B cell (primary cell): ENCODE measurements at regions of chr5 and their contacts with region 1.

Region 1: DNA sequence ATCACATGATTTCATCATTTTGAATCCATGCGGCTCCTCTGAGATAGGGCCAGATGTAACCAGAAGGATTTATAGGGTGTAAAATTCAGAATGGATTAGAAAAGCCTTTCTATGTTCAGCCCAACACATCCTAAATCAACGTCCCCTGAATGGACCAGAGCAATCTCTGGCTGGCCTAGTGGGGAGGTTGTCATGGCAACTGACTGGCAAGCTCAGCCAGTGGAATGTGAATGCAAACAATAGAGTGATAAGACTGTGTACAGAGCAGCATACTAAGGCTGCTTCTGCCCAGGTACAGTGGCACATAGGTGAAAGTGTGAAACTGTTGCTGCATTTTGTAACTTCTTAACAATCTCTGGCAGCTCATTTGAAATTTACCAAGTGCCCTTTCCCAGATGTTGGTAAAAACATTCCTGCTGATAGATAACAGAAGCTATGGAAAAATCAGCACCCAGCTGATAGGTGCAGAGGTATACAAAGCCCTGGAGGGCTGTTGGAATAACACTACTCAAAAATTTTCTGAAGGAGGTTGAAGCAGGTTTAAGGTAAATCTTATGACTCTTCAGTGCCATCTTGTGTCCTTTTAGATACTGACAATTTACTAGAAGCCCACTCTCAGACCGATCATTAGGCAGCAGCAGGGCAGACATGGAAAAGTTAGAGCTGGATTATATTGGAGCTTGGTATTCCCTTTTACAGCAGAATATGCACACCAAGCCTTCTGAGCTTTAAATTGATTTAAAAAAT is 267.2 kb downstream of the RAB3C start:
- DNase-seq: peak; percentile 67
- ATAC-seq: peak; percentile 78
- H3K4me3 ChIP-seq: no peak overlapping the region
- H3K4me3 Mint-ChIP-seq: no peak overlapping the region
- H3K27ac ChIP-seq: no peak overlapping the region
- H3K27ac Mint-ChIP-seq: no peak overlapping the region
- H3K4me1 ChIP-seq: no peaks in the 10 kb centered on the region
- H3K4me1 Mint-ChIP-seq: no peaks in the 10 kb centered on the region
- H3K27me3 ChIP-seq: no peaks in the 10 kb centered on the region
- H3K27me3 Mint-ChIP-seq: peaks cover 3% of the 10 kb centered on the region
- CTCF ChIP-seq: peak; percentile 78

Region 2: DNA sequence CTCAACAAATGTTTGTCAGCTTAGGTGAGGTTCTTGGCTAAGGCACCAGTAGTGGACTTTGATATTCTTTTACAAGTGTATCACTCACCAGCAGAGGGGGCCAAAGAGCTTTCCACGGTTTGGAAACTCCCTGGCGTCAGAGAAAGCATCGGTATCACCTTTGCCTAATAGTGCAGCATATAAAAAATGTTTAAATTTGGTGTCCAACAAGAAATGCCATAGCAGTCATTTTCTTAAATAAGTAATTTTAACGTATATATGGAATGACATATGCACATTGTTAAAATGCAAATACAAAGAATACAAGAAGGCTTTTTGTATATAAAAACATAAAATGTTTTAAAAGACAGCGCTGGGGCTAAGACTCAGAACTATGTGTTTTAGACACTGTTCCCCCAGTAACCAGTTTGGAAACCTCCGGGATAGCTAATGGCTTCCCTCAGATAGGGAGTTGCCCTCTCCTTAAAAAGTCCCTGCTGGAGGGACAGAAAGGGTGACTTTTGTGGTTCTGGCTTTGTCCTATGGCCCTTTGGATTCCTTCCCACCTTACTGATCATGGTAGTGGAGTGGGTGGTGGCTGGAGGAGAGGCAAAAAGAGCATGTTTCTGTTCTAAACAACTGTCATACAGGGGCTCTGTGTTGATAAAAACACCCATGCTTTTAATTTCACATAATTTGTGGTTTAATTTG is 1551.7 kb before region 1 on chr5:
- CTCF ChIA-PET with region 1: interaction called, 4 read pairs
- POLR2A ChIA-PET with region 1: no interaction called
- intact Hi-C with region 1: loop called (anchors 1 kb)
- DNase-seq: peak; percentile 88
- ATAC-seq: peak; percentile 82
- H3K4me3 ChIP-seq: peak overlapping the region in 4 of 5 experiments; percentile 47 to 59 (median 51)
- H3K4me3 Mint-ChIP-seq: peak overlapping the region; percentile 76
- H3K27ac ChIP-seq: no peak overlapping the region
- H3K27ac Mint-ChIP-seq: peak overlapping the region; percentile 28
- H3K4me1 ChIP-seq: peaks cover 6 to 13% of the 10 kb centered on the region in 2 donors
- H3K4me1 Mint-ChIP-seq: peaks cover 16% of the 10 kb centered on the region
- H3K27me3 ChIP-seq: no peaks in the 10 kb centered on the region
- H3K27me3 Mint-ChIP-seq: no peaks in the 10 kb centered on the region
- CTCF ChIP-seq: peak; percentile 75

Region 3: DNA sequence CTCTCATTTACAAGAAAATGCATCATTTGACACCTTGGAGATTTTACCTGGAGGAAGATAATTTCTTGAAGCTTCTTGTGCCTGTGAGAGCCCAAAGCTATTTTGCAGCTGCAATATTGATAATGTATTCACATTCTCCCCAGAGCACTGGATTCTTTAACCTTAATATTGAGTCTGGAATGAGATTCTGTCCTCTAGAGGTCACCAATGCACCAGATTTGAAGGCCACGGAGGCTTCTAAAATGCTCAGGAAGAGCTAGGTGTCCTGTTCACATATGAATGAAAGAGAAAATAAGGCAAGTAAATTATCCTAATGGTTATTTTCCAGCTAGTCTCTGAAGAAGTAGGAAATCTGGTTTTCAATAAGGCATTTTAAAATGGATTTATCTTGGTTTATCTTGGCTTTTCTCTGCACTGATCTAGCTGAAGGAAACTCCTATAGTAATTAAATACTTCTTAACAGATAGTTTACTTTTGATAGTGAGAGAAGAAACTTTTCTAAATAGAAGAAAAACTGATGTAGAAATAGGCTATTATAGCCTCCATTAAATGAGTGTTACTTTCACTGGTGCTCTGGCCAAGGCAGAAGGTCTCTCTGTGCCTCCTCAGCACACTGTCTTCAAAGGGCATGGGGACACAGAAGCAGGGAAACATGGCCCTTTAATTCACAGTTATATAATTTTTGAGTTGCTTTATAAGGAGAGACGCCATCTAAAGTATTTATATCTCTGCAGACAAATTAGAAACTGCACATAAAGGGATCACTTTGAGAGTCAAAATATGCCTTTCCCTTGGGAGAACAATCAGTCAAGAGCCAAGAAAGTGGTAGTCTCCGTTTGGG is 1070.5 kb before region 1 on chr5:
- CTCF ChIA-PET with region 1: interaction called, 8 read pairs
- POLR2A ChIA-PET with region 1: no interaction called
- intact Hi-C with region 1: loop called (anchors 2 kb)
- DNase-seq: peak; percentile 44
- ATAC-seq: no peak
- H3K4me3 ChIP-seq: no peak overlapping the region
- H3K4me3 Mint-ChIP-seq: no peak overlapping the region
- H3K27ac ChIP-seq: no peak overlapping the region
- H3K27ac Mint-ChIP-seq: no peak overlapping the region
- H3K4me1 ChIP-seq: no peaks in the 10 kb centered on the region
- H3K4me1 Mint-ChIP-seq: no peaks in the 10 kb centered on the region
- H3K27me3 ChIP-seq: no peaks in the 10 kb centered on the region
- H3K27me3 Mint-ChIP-seq: no peaks in the 10 kb centered on the region
- CTCF ChIP-seq: peak; percentile 25

Region 4: DNA sequence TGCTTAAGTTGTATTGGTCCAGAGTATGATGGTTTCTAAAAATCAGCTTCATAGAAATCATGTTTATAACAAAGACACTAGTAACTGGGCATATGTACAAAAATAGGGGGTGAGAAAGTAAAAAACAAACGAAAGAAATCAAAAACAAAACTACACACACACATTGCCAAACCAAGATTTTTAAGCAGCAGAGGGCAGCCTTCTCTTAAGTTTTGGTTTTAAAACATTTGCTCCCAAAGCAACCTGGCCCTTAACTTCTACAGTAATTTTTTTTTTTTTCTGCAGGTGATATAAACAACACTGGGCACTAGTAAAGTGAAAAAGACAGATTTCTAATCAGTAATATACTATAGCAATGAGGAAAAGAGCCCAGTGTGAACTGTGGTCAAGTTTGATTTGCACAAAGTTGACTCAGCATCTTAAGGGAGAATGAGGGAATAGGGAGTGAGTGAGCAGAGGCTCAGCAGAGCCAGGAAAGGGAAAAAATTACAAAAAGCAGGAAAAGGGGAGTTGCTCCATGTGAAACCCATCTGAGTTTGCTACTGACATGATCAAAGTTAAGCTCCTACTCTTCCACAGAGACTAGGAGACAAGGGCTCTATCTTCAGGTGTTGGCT is 372.2 kb before region 1 on chr5:
- CTCF ChIA-PET with region 1: interaction called, 354 read pairs
- POLR2A ChIA-PET with region 1: no interaction called
- intact Hi-C with region 1: loop called (anchors 1 kb)
- DNase-seq: peak; percentile 59
- ATAC-seq: no peak
- H3K4me3 ChIP-seq: peak overlapping the region in 1 of 5 experiments; percentile 18
- H3K4me3 Mint-ChIP-seq: peak overlapping the region; percentile 14
- H3K27ac ChIP-seq: no peak overlapping the region
- H3K27ac Mint-ChIP-seq: no peak overlapping the region
- H3K4me1 ChIP-seq: peaks cover 15 to 21% of the 10 kb centered on the region in 2 donors
- H3K4me1 Mint-ChIP-seq: peaks cover 20% of the 10 kb centered on the region
- H3K27me3 ChIP-seq: no peaks in the 10 kb centered on the region
- H3K27me3 Mint-ChIP-seq: no peaks in the 10 kb centered on the region
- CTCF ChIP-seq: peak; percentile 76

Region 5: GRCh38 chr5:58484505-58484904 is 365.6 kb before region 1 on chr5:
- CTCF ChIA-PET with region 1: interaction called, 354 read pairs
- POLR2A ChIA-PET with region 1: no interaction called
- intact Hi-C with region 1: no loop called
- DNase-seq: no peak
- ATAC-seq: peak; percentile 69
- H3K4me3 ChIP-seq: peak overlapping the region in 1 of 5 experiments; percentile 9
- H3K4me3 Mint-ChIP-seq: peak overlapping the region; percentile 50
- H3K27ac ChIP-seq: peak overlapping the region in 1 of 2 donors; percentile 3
- H3K27ac Mint-ChIP-seq: peak overlapping the region; percentile 72
- H3K4me1 ChIP-seq: peaks cover 30 to 44% of the 10 kb centered on the region in 2 donors
- H3K4me1 Mint-ChIP-seq: peaks cover 15% of the 10 kb centered on the region
- H3K27me3 ChIP-seq: no peaks in the 10 kb centered on the region
- H3K27me3 Mint-ChIP-seq: no peaks in the 10 kb centered on the region
- CTCF ChIP-seq: no peak

Region 6: GRCh38 chr5:58834242-58835225 is 15.6 kb before region 1 on chr5:
- CTCF ChIA-PET with region 1: interaction called, 16 read pairs
- POLR2A ChIA-PET with region 1: no interaction called
- intact Hi-C with region 1: no loop called
- DNase-seq: no peak
- ATAC-seq: no peak
- H3K4me3 ChIP-seq: no peak overlapping the region
- H3K4me3 Mint-ChIP-seq: no peak overlapping the region
- H3K27ac ChIP-seq: no peak overlapping the region
- H3K27ac Mint-ChIP-seq: no peak overlapping the region
- H3K4me1 ChIP-seq: no peaks in the 10 kb centered on the region
- H3K4me1 Mint-ChIP-seq: no peaks in the 10 kb centered on the region
- H3K27me3 ChIP-seq: no peaks in the 10 kb centered on the region
- H3K27me3 Mint-ChIP-seq: peaks cover 6% of the 10 kb centered on the region
- CTCF ChIP-seq: no peak

Region 7: GRCh38 chr5:58925627-58926540 is 75.8 kb after region 1 on chr5:
- CTCF ChIA-PET with region 1: no interaction called
- POLR2A ChIA-PET with region 1: no interaction called
- intact Hi-C with region 1: no loop called
- DNase-seq: no peak
- ATAC-seq: no peak
- H3K4me3 ChIP-seq: no peak overlapping the region
- H3K4me3 Mint-ChIP-seq: no peak overlapping the region
- H3K27ac ChIP-seq: no peak overlapping the region
- H3K27ac Mint-ChIP-seq: no peak overlapping the region
- H3K4me1 ChIP-seq: no peaks in the 10 kb centered on the region
- H3K4me1 Mint-ChIP-seq: no peaks in the 10 kb centered on the region
- H3K27me3 ChIP-seq: peaks cover 0 to 6% (median 2%) of the 10 kb centered on the region in 4 experiments
- H3K27me3 Mint-ChIP-seq: peaks cover 24% of the 10 kb centered on the region
- CTCF ChIP-seq: no peak